Sigmoid colon (tissue), 7 donors: ENCODE measurements at regions of chr2 and their contacts with region 1.

Region 1: DNA sequence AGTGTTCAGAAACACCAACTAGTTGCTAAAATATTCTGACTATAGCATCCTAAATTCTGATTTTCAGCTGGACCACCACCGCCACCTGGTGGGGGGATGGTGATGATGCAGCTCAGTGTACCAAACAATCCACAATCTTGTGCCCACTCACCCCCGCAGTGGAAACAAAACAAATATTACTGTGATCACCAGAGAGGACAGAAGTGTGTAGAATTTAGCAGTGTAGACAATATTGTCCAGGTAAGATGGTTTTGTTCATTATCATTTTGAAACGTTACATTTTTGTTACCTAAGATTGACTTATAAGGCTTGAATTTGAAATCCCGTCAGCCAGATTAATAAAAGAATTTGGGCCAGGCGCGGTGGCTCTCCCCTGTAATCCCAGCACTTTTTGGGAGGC is 31.7 kb upstream of the UBXN4 start:
- DNase-seq: peak; percentile 72
- H3K4me3 ChIP-seq: no peak overlapping the region
- H3K27ac ChIP-seq: no peak overlapping the region
- H3K4me1 ChIP-seq: no peaks in the 10 kb centered on the region
- H3K27me3 ChIP-seq: no peaks in the 10 kb centered on the region
- CTCF ChIP-seq: peak; percentile 65 to 93 (median 83)
- EP300 ChIP-seq: no peak
- POLR2A ChIP-seq: no peak

Region 2: DNA sequence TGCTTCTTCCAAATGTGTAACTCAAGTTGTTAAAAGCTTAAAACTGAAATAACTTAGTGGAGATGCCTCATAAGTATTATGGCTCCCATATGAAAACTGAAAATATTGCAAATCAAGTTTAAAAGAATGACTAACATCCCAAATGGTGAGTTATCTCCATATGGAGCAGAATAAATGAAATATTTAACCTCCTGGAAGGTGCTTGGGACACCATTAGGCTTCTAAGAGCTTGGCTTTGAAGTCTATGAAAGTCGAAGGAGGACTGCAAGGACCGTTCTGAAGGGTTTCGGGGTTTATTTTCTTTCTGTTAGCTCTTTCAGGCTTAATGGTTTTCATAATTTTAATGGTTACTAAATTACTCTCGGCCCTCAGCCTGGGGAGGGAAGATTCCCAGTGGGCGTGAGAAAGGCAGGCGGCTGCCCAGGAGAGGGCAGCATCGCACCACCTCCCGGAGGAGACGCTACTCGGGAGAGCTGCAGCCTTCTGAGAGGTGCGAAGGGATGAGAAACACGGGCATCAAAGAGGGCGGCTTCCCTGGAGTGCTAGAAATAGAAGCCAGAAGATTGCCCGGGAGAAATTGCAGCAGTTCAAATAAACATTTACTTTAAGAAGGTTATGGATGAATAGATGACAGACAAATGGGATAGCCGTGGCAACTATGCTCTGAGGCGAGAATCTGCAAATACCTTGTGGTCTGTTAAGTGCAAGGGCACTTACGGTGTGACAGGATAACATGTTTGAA is 705.8 kb before region 1 on chr2:
- intact Hi-C with region 1: loop called (anchors 1 kb)
- DNase-seq: peak; percentile 82
- H3K4me3 ChIP-seq: no peak overlapping the region
- H3K27ac ChIP-seq: no peak overlapping the region
- H3K4me1 ChIP-seq: peaks cover 0 to 7% (median 2%) of the 10 kb centered on the region in 4 donors
- H3K27me3 ChIP-seq: peaks cover 0 to 21% (median 0%) of the 10 kb centered on the region in 3 donors
- CTCF ChIP-seq: peak; percentile 67 to 87 (median 70)
- EP300 ChIP-seq: no peak
- POLR2A ChIP-seq: no peak

Region 3: GRCh38 chr2:135741395-135742324 is 31.7 kb after region 1 on chr2 and contains the start of gene UBXN4:
- intact Hi-C with region 1: no loop called
- DNase-seq: peak; percentile 99
- H3K4me3 ChIP-seq: peak within 1 kb of the TSS; percentile 79 to 98 (median 94)
- H3K27ac ChIP-seq: peak within 1 kb of the TSS; percentile 89 to 100 (median 100)
- H3K4me1 ChIP-seq: peaks cover 0 to 38% (median 32%) of the 10 kb centered on the region in 4 donors
- H3K27me3 ChIP-seq: no peaks in the 10 kb centered on the region
- CTCF ChIP-seq: peak in 1 of 4 experiments; percentile 22
- EP300 ChIP-seq: no peak
- POLR2A ChIP-seq: peak; percentile 66 to 89
- total RNA-seq, gene UBXN4: 51.8 to 63.3 (median 59.8) TPM